Ascending aorta (tissue), 2 donors: ENCODE measurements at regions of chr15 and their contacts with region 1.

Region 1: GRCh38 chr15:89647191-89647851 is 7.9 kb downstream of the KIF7 start:
- DNase-seq: peak in 1 of 2 donors; percentile 88
- H3K4me3 ChIP-seq: no peak overlapping the region
- H3K27ac ChIP-seq: no peak overlapping the region
- H3K4me1 ChIP-seq: peaks cover 0 to 3% of the 10 kb centered on the region in 2 donors
- H3K27me3 ChIP-seq: no peaks in the 10 kb centered on the region
- CTCF ChIP-seq: peak; percentile 74 to 94 (median 87)

Region 2: DNA sequence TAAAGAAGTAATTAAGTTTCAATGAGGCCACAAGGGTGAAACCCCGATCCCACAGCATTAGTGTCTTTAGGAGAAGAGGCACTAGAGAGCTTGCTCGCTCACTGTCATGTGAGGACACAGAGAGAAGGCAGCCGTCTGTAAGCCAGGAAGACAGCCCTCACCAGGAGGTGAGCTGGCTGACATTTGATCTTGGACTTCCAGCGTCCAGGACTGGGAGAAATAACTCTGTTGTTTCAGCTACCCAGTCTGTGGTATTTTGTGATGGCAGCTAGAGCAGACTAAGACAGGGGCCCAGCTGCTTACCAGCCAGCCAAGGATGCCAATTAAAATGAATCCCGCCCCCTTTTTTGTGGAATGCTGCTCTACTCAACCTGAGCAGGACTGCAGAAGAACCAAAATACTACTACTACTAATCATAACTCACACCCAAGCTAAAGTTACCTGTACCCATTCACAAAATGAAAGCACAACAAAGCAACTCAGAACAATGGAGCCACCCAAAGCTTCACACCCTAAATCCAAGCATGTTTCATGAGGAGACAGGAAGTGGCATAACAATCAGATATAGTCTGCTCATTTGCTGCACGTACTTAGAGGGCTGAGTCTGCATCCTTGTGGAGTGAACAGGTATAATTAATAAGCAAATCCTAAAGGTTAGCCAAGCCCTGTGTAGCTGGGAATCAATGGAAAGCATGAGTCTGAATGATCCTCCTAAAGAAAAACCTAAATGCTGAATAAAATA is 115.4 kb before region 1 on chr15:
- intact Hi-C with region 1: no loop called
- DNase-seq: no peak
- H3K4me3 ChIP-seq: no peak overlapping the region
- H3K27ac ChIP-seq: no peak overlapping the region
- H3K4me1 ChIP-seq: no peaks in the 10 kb centered on the region
- H3K27me3 ChIP-seq: no peaks in the 10 kb centered on the region
- CTCF ChIP-seq: no peak

Region 3: DNA sequence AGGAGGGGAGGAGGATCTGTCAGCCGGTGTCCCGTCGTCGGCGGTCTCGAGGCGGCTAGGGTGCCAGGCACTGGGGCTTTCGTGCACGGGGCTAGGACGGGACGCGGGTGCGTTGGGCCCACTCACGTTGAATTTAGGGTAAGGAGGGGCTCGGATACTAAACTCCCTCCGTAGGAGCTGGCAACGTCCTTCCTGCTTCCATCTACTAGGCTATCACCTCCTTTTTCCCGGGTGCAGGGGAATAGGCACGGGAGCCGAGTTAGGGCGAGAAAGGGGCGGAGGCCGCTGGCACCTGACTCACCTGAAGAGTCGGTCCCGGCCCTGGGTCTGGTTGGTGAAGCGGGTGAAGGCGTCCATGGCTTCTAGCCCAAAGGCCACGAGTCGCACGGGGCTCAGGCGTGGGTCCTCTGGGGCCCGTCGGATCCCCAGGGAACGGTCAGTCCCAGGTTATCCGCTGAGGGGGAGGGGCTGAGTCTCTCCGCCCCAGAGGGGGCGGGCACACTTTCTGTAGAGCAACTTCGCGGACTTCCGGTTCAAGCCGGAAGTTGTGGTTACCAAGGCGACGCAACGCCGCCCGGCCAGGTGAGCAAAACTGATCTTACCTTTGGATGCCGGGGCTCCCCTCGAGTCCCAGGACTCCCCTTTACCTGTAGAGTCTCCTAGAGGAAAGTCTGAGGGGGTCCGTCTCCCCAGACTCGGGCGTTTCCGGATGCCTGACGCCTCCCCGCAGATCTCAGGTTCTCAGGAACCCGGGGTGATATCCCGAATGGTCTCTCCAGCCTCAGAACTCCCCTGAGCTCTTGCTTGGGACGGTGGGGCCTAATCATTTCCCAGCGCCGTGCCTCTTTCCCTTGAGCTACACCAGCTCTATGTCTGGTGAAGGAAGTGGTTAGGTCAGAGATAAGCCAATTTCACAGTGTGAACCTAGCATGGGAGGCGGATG is 43.2 kb after region 1 on chr15 and contains the starts of genes PEX11A and WDR93:
- intact Hi-C with region 1: loop called (anchors 5 kb)
- DNase-seq: peak; percentile 21 to 88
- H3K4me3 ChIP-seq: peak within 1 kb of the TSS; percentile 77 to 92
- H3K27ac ChIP-seq: peak within 1 kb of the TSS; percentile 42 to 47
- H3K4me1 ChIP-seq: peaks cover 0 to 7% of the 10 kb centered on the region in 2 donors
- H3K27me3 ChIP-seq: no peaks in the 10 kb centered on the region
- CTCF ChIP-seq: no peak
- total RNA-seq, gene PEX11A: 34.2 TPM
- total RNA-seq, gene WDR93: not detected

Region 4: DNA sequence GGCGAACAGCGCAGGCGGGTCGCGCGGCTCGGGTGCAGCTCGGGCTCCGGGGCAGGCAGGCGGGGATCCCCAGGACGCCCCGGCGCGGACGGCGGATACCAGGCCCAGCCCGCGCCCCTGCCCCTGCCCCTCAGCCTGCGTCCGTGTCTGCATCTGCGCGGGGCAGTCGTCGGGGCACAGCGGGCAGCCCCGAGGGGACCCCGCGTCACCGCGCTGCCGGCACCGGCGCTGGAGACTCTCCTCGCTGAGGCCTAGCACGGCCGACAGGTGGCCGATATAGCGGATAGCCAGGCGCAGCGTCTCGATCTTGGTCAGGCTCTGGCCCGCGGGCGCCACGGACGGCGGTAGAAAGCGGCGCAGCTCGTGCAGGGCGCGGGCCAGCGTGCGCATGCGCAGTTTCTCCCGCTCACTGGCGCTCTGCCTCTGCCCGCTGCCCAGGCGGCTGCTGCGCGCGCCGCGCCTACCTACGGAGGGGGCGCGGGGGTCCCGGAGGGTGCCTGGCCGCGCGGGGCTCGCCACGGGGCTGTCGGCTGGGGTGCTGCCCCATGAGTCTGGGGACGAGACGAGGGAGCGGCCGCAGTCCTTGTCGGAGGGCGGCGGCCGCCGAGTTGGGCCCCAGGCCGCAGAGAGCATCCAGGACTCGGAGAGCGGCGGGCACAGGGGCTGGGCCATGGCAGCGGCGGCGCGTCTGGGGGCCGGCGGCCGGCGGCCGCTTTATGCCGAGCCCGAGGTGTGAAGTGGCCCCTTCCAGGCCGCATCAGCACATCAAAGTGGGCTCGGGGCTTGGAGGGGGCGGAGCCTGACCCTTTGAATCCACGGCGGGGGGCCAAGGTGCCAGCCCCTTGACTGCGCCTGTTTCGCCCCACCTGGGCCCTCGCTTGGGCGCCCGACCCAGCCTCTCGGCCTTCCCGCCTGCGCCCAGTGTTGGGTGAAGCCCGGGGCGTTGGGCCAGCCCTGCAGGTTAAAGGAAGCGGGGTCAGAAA is 103.5 kb after region 1 on chr15 and contains the start of gene MESP1:
- intact Hi-C with region 1: loop called (anchors 2 kb)
- DNase-seq: peak; percentile 25 to 95
- H3K4me3 ChIP-seq: peak within 1 kb of the TSS; percentile 77 to 78
- H3K27ac ChIP-seq: no peak within 1 kb of the TSS
- H3K4me1 ChIP-seq: peaks cover 6 to 16% of the 10 kb centered on the region in 2 donors
- H3K27me3 ChIP-seq: no peaks in the 10 kb centered on the region
- CTCF ChIP-seq: peak; percentile 88 to 94 (median 90)
- total RNA-seq, gene MESP1: 0.85 TPM